Activated B cell treated with CpG ODN at 0.5 μM for 24 hours (primary cell): ENCODE measurements at regions of chr1 and their contacts with region 1.

Region 1: GRCh38 chr1:113777561-113777960 is 18.3 kb upstream of the PHTF1 start:
- DNase-seq: no peak
- ATAC-seq: no peak
- H3K4me3 Mint-ChIP-seq: no peak overlapping the region
- H3K27ac Mint-ChIP-seq: no peak overlapping the region
- H3K4me1 Mint-ChIP-seq: peaks cover 10% of the 10 kb centered on the region
- H3K27me3 Mint-ChIP-seq: no peaks in the 10 kb centered on the region
- CTCF ChIP-seq: no peak

Region 2: GRCh38 chr1:113793878-113794834 is 16.6 kb after region 1 on chr1:
- CTCF ChIA-PET with region 1: interaction called, 5 read pairs
- POLR2A ChIA-PET with region 1: no interaction called
- intact Hi-C with region 1: loop called (anchors 2 kb)
- DNase-seq: no peak
- ATAC-seq: no peak
- H3K4me3 Mint-ChIP-seq: no peak overlapping the region
- H3K27ac Mint-ChIP-seq: no peak overlapping the region
- H3K4me1 Mint-ChIP-seq: peaks cover 27% of the 10 kb centered on the region
- H3K27me3 Mint-ChIP-seq: no peaks in the 10 kb centered on the region
- CTCF ChIP-seq: no peak

Region 3: GRCh38 chr1:113930499-113931161 is 153.1 kb after region 1 on chr1:
- CTCF ChIA-PET with region 1: no interaction called
- POLR2A ChIA-PET with region 1: no interaction called
- intact Hi-C with region 1: no loop called
- DNase-seq: peak; percentile 21
- ATAC-seq: peak; percentile 10
- H3K4me3 Mint-ChIP-seq: peak overlapping the region; percentile 96
- H3K27ac Mint-ChIP-seq: peak overlapping the region; percentile 91
- H3K4me1 Mint-ChIP-seq: peaks cover 61% of the 10 kb centered on the region
- H3K27me3 Mint-ChIP-seq: no peaks in the 10 kb centered on the region
- CTCF ChIP-seq: no peak